Activated CD8-positive, alpha-beta T cell treated with anti-CD3 and anti-CD28 coated beads for 36 hours (primary cell): ENCODE measurements at regions of chr2 and their contacts with region 1.

Region 1: GRCh38 chr2:28958689-28959088 is 22.4 kb upstream of the TOGARAM2 start:
- DNase-seq: peak; percentile 40
- ATAC-seq: peak; percentile 66
- H3K4me3 Mint-ChIP-seq: no peak overlapping the region
- H3K27ac Mint-ChIP-seq: no peak overlapping the region
- H3K4me1 Mint-ChIP-seq: peaks cover 2% of the 10 kb centered on the region
- H3K27me3 Mint-ChIP-seq: no peaks in the 10 kb centered on the region
- CTCF ChIP-seq: peak; percentile 88

Region 2: DNA sequence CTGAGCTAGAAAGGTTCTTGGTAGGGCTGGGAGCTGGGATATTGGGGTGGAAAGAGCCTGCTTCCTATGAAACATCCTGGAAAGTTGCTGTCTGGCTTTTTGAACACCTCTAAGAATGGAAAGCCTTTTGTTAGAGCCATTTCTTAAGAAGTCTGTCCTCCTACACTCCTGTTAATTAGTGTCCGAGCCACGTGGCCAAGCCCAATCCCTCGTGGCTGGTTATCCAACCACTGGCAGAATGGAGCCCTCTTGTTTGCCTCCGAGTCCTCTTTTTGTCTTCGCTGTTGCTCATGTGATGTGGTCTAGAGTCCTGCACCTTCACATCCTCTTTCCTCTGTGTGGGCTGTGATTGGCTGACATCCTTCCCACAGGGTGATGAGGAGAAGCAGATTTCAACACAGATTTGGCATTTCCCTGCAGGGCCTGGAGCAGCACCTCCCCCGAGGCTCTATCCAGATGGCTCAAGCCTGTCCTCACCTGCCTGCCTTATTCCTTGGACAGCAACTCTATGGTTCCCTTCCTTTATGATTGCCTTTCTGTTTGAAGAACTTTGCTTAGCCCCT is 14.2 kb after region 1 on chr2:
- CTCF ChIA-PET with region 1: interaction called, 10 read pairs
- POLR2A ChIA-PET with region 1: no interaction called
- intact Hi-C with region 1: no loop called
- DNase-seq: peak; percentile 15
- ATAC-seq: peak; percentile 37
- H3K4me3 Mint-ChIP-seq: no peak overlapping the region
- H3K27ac Mint-ChIP-seq: no peak overlapping the region
- H3K4me1 Mint-ChIP-seq: peaks cover 5% of the 10 kb centered on the region
- H3K27me3 Mint-ChIP-seq: no peaks in the 10 kb centered on the region
- CTCF ChIP-seq: no peak

Region 3: DNA sequence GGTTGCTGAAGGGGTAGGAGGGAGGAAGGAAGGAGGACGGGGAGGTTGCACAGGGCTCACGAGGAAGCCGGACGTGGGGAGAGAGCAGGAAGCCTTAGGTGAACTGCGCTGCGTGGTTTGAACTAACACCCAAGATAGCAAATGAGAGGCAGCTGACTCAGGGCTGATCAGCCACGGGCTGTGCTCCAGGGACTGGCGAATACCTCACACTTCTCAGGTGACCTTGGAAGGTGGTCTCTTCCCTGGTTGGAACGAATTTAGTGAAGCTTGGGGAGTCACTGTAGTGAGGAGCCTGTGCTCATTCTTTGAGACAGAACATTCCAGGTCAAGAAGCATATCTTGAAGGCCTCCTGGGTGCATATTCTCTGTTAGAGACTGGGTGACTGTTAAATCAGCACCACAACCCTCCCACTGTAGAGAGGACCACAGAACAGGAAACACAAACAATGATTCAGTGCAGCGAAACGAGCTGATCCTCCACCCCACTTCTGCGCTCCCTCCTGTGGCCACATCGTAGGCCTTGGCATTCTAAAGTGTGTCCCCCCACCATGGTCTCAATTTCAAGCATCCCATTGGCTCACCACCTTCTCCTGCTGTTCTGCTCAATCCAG is 56.2 kb after region 1 on chr2:
- CTCF ChIA-PET with region 1: interaction called, 14 read pairs
- POLR2A ChIA-PET with region 1: no interaction called
- intact Hi-C with region 1: loop called (anchors 5 kb)
- DNase-seq: peak; percentile 88
- ATAC-seq: peak; percentile 76
- H3K4me3 Mint-ChIP-seq: peak overlapping the region; percentile 79
- H3K27ac Mint-ChIP-seq: peak overlapping the region; percentile 97
- H3K4me1 Mint-ChIP-seq: peaks cover 76% of the 10 kb centered on the region
- H3K27me3 Mint-ChIP-seq: no peaks in the 10 kb centered on the region
- CTCF ChIP-seq: peak; percentile 37

Region 4: DNA sequence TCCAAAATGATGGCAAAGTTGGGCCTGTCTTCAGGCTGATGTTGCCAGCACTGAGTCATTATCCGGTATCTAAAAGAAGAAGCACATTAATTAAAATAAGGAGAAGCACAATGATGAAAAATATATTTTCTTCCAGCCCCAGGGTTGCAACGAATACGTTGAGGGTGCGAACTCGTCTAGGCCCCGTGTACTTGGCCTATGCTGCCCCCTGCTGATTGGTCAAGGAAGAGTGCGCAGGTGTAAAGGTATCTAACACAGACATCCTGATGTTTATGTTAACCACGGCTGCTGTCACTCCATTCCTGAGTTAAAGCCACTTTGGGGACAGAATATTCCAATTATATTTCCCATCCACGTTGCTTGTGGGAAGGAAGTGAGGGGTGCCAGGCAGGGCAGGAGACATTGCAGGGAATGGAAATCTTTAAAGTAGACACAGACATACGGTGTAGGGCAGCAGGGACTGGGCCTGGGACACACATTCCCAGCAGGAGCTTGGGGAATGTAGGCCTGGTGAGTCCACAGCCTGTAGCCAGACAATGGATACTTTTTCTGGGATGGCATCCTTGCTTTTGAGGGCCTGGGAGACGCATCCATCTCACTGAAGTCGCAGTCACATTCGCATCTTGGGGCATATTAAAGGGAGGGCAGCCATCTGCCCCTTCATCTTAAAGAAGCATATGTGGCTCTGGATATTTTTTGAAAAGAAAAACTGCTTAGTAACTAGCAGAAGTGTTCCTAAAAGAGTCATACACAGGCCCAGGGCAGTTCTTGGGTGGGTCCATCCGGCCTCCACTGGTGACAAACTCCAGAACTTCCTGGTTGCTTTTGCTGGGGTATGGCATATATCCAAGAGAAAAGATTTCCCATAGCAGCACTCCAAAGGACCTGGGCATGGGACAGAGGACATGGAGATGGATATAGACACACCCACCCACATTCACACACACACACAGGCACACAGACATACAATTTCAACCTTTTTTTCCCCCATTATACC is 238.4 kb after region 1 on chr2:
- CTCF ChIA-PET with region 1: interaction called, 11 read pairs
- POLR2A ChIA-PET with region 1: no interaction called
- intact Hi-C with region 1: loop called (anchors 1 kb)
- DNase-seq: peak; percentile 85
- ATAC-seq: peak; percentile 98
- H3K4me3 Mint-ChIP-seq: no peak overlapping the region
- H3K27ac Mint-ChIP-seq: no peak overlapping the region
- H3K4me1 Mint-ChIP-seq: no peaks in the 10 kb centered on the region
- H3K27me3 Mint-ChIP-seq: no peaks in the 10 kb centered on the region
- CTCF ChIP-seq: peak; percentile 92